Calu3 (cell line): ENCODE measurements at regions of chr18 and their contacts with region 1.

Region 1: DNA sequence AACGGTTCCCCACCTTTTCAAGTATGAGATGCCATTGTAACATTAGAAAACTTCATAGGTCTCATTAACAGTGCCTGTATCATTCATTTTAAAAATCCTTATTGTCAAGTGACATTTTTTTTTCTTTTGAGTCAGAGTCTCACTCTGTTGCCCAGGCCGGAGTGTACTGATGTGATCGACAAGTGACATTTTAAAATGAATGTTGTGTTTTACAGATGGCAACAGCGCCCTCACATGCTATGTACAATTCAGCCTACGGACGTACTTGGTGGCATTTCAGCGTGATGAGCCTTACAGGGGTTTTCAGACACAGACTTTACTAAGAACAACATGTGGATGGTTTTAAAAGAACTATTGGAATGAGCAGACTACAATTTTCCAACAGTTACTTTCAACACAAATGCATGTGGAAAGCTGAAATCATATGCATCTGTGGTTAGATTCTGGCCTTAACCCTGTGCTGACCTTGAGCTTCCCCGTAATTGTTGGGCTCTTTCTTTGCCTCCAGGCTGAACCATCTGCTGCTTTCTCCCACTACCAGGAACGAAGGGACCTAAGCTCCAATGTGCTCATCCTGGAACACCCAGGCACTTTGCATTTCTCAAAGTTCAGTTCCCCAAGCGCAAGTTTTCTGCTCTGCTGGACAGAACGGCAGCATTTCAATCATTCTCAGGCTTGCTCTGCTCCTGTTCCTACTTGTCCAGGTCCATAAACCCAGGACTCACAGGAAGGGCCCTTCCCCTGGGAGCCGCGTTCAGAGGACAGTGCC is 119.9 kb upstream of the NDUFV2 start:
- DNase-seq: peak; percentile 75
- H3K4me3 Mint-ChIP-seq: no peak overlapping the region
- H3K27ac Mint-ChIP-seq: no peak overlapping the region
- H3K4me1 Mint-ChIP-seq: peaks cover 54% of the 10 kb centered on the region
- H3K27me3 Mint-ChIP-seq: no peaks in the 10 kb centered on the region
- CTCF ChIP-seq: peak; percentile 47

Region 2: GRCh38 chr18:8696749-8697211 is 285.8 kb before region 1 on chr18:
- CTCF ChIA-PET with region 1: interaction called, 13 read pairs
- intact Hi-C with region 1: loop called (anchors 2 kb)
- DNase-seq: peak; percentile 91
- H3K4me3 Mint-ChIP-seq: no peak overlapping the region
- H3K27ac Mint-ChIP-seq: no peak overlapping the region
- H3K4me1 Mint-ChIP-seq: peaks cover 7% of the 10 kb centered on the region
- H3K27me3 Mint-ChIP-seq: no peaks in the 10 kb centered on the region
- CTCF ChIP-seq: peak; percentile 93

Region 3: GRCh38 chr18:8800449-8800848 is 182.2 kb before region 1 on chr18:
- CTCF ChIA-PET with region 1: interaction called, 19 read pairs
- intact Hi-C with region 1: loop called (anchors 5 kb)
- DNase-seq: peak; percentile 37
- H3K4me3 Mint-ChIP-seq: no peak overlapping the region
- H3K27ac Mint-ChIP-seq: peak overlapping the region; percentile 94
- H3K4me1 Mint-ChIP-seq: peaks cover 80% of the 10 kb centered on the region
- H3K27me3 Mint-ChIP-seq: no peaks in the 10 kb centered on the region
- CTCF ChIP-seq: no peak

Region 4: DNA sequence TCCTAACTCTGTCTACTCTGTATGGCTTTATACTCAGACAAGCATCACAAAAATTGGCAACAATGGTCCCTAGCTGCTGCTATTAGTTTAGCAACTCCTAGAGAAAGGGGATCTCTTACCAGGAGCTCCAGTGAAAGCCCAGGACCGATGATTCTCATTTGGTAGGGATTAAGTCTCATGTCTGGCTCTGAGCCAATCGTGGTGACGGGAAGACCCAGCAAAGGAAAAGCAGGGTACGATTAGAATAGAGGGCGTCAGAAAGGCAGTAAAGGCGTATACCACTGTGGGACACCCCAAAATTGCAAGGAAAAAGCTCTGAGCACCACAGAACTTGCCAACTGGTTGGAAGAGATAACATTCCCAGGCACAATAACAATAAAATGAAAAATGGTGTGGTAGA is 147.7 kb before region 1 on chr18:
- CTCF ChIA-PET with region 1: interaction called, 5 read pairs
- intact Hi-C with region 1: loop called (anchors 5 kb)
- DNase-seq: no peak
- H3K4me3 Mint-ChIP-seq: no peak overlapping the region
- H3K27ac Mint-ChIP-seq: no peak overlapping the region
- H3K4me1 Mint-ChIP-seq: peaks cover 10% of the 10 kb centered on the region
- H3K27me3 Mint-ChIP-seq: no peaks in the 10 kb centered on the region
- CTCF ChIP-seq: no peak

Region 5: GRCh38 chr18:8890957-8891464 is 91.6 kb before region 1 on chr18:
- CTCF ChIA-PET with region 1: interaction called, 3 read pairs
- intact Hi-C with region 1: loop called (anchors 5 kb)
- DNase-seq: peak; percentile 75
- H3K4me3 Mint-ChIP-seq: peak overlapping the region; percentile 48
- H3K27ac Mint-ChIP-seq: peak overlapping the region; percentile 92
- H3K4me1 Mint-ChIP-seq: peaks cover 45% of the 10 kb centered on the region
- H3K27me3 Mint-ChIP-seq: no peaks in the 10 kb centered on the region
- CTCF ChIP-seq: no peak

Region 6: GRCh38 chr18:8930990-8931648 is 51.5 kb before region 1 on chr18:
- CTCF ChIA-PET with region 1: no interaction called
- intact Hi-C with region 1: no loop called
- DNase-seq: no peak
- H3K4me3 Mint-ChIP-seq: no peak overlapping the region
- H3K27ac Mint-ChIP-seq: no peak overlapping the region
- H3K4me1 Mint-ChIP-seq: peaks cover 20% of the 10 kb centered on the region
- H3K27me3 Mint-ChIP-seq: no peaks in the 10 kb centered on the region
- CTCF ChIP-seq: no peak